Mucosa of descending colon (tissue), 3 donors: ENCODE measurements at regions of chr2 and their contacts with region 1.

Region 1: DNA sequence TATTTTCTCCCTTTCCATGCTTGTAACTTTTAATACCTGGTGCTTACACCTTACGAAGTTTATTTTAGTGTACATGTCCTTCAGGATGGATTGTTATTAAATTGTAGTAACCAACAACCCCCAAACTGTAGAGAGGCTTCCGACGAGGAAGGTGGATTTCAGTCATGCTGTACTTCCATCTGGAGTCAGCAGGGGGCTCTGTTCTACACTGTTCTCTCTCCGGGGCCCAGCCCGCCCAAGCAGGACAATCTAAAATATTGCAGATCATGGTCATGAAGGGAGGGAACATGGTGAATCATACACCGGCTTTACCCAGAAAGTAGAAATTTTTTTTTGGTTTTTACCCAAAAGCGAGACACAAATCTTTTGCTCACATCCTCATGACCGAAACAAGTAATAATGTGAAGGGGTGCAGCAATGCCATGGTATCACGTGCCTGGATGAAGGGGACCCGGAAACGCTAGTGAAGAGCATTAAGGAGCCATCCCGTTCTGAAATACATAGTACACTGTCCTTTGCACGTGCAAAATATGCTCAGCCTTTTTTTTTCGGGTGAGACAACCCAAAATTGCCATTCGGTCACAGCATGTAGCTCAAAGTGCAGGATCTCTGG is 884.8 kb downstream of the EPHA4 start:
- DNase-seq: peak; percentile 51 to 85 (median 55)
- ATAC-seq: peak; percentile 91
- H3K4me3 ChIP-seq: no peak overlapping the region
- H3K4me1 ChIP-seq: no peaks in the 10 kb centered on the region
- CTCF ChIP-seq: peak; percentile 68

Region 2: DNA sequence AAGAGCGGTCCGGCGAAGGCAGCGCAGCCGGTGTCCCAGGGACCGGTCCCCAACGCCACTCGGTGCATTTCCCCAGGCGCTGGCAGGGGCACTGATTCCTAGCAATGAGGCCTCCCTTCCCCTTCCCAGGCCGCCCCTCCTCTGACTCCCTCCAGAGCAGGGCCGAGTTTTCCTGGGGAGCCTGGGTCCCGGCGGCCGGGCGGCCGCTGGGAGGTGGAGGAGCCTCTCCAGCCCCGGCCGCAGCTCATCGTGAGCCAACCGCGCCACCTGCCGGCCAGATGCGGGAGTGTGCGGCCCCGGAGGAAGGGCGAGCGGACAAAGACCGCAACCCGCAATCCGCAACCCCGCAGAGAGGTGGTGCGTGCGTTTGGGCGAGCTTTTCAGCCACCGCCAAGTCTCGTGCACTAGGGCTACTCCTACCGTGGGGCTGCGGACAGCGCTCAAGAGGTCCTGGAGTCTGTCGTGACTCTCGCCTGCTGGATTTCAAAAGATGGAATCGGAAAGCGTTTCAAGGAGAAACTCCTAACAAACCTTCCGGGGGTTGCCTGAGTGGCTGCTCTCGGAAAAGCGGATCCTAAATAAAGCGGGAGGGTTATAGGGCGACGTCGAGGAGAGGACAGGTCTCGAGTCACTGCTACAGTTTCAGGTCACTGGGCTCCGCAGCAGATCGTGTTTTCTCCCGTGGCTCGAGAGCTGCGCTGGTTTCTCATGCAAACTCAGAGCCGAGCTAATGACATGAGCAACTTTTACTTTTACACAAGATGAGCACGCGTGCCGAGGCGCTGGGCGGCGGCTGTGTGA is 886.3 kb after region 1 on chr2:
- intact Hi-C with region 1: loop called (anchors 2 to 5 kb)
- DNase-seq: peak; percentile 88 to 93 (median 92)
- ATAC-seq: peak; percentile 81
- H3K4me3 ChIP-seq: peak overlapping the region; percentile 48
- H3K4me1 ChIP-seq: peaks cover 15% of the 10 kb centered on the region
- CTCF ChIP-seq: peak; percentile 91

Region 3: DNA sequence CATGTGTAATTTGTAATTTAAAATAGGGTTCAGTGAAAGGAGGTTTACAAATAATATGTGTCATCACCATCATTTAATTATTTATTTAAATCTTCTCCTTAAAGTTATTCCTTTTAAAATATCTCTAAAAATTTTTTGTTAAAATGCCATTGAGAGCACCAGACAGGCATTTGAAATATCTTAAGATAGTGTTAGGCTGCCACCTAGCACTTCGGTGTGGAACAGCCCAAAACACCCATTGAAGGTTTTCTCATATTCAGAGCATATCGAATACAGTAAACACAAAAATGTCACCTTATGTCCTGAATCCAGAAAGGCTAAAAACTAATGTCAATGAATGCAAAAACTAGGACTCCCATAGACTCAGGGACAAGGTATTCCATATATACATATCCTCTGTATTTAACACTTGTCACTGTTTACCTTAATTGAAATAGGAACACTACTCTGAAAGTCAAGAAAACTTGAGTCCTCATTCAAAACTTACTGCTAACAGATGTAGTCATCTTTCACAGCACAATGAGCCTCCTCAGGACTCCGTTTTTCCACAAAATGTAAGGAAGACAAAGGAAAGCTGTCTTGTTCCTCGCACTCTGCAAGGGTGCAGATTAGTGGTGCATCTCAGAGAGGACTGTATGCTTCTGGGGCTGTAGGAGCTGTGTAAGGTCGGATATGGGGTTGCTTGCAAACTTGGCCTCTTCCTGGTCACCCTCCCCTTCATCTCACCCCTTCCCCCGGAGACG is 1281.9 kb after region 1 on chr2:
- intact Hi-C with region 1: loop called in 1 of 2 experiments (anchors 10 kb)
- DNase-seq: peak in 1 of 3 donors; percentile 26
- ATAC-seq: peak; percentile 56
- H3K4me3 ChIP-seq: no peak overlapping the region
- H3K4me1 ChIP-seq: no peaks in the 10 kb centered on the region
- CTCF ChIP-seq: no peak